ENCODE measurements at regions of chr3 and their contacts with region 1.

Region 1: GRCh38 chr3:179565496-179565895 is 2.8 kb downstream of the ACTL6A start:
- DNase-seq: no peak
- H3K4me3 ChIP-seq: no peak overlapping the region
- H3K27ac ChIP-seq: no peak overlapping the region
- H3K4me1 ChIP-seq: peaks cover 0 to 7% of the 10 kb centered on the region in 2 donors
- H3K27me3 ChIP-seq: no peaks in the 10 kb centered on the region
- CTCF ChIP-seq: no peak
- POLR2A ChIP-seq: no peak

Region 2: GRCh38 chr3:179432021-179432420 is 133.5 kb before region 1 on chr3:
- intact Hi-C with region 1: loop called (anchors 5 kb)
- DNase-seq: no peak
- H3K4me3 ChIP-seq: no peak overlapping the region
- H3K27ac ChIP-seq: no peak overlapping the region
- H3K4me1 ChIP-seq: peaks cover 0 to 4% of the 10 kb centered on the region in 2 donors
- H3K27me3 ChIP-seq: no peaks in the 10 kb centered on the region
- CTCF ChIP-seq: no peak
- POLR2A ChIP-seq: no peak

Region 3: GRCh38 chr3:180306691-180307090 is 741.2 kb after region 1 on chr3:
- intact Hi-C with region 1: no loop called
- DNase-seq: no peak
- H3K4me3 ChIP-seq: no peak overlapping the region
- H3K27ac ChIP-seq: peak overlapping the region in 1 of 2 donors; percentile 27
- H3K4me1 ChIP-seq: no peaks in the 10 kb centered on the region
- H3K27me3 ChIP-seq: no peaks in the 10 kb centered on the region
- CTCF ChIP-seq: no peak
- POLR2A ChIP-seq: no peak

Region 4: DNA sequence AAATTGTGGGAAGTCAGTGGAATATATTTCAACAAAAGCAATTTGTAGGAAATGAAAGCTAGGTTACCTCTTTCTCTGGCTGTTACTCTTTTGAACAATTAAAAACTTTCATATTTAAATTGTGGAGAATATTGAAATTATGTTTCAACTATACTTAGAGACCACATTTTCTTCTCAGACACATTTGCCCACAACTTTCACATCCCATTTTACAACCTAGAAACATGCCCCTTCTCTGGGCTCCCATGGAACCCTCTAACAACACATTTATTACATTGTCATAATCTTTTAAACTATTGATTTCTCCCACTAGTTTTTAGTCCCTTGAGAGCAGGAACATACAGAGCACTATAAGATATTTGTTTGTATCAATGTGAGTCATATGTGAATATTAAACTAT is 824.8 kb after region 1 on chr3:
- intact Hi-C with region 1: no loop called
- DNase-seq: no peak
- H3K4me3 ChIP-seq: no peak overlapping the region
- H3K27ac ChIP-seq: no peak overlapping the region
- H3K4me1 ChIP-seq: no peaks in the 10 kb centered on the region
- H3K27me3 ChIP-seq: no peaks in the 10 kb centered on the region
- CTCF ChIP-seq: no peak
- POLR2A ChIP-seq: no peak

Region 5: DNA sequence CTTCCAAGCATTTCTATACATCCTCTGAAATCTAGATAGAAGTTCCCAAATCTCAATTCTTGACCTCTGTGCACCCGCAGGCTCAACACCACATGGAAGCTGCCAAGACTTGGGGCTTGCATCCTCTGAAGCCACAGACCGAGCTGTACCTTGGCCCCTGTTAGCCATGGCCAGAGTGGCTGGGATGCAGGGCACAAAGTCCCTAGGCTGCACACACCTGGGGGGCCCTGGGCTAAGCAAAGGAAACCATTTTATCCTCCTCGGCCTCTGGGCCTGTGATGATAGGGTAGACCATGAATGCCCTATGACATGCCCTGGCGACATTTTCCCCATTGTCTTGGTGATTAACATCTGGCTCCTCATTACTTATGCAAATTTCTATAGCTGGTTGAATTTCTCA is 1210.9 kb after region 1 on chr3:
- intact Hi-C with region 1: no loop called
- DNase-seq: no peak
- H3K4me3 ChIP-seq: no peak overlapping the region
- H3K27ac ChIP-seq: no peak overlapping the region
- H3K4me1 ChIP-seq: no peaks in the 10 kb centered on the region
- H3K27me3 ChIP-seq: no peaks in the 10 kb centered on the region
- CTCF ChIP-seq: no peak
- POLR2A ChIP-seq: no peak